Activated CD8-positive, alpha-beta T cell treated with anti-CD3 and anti-CD28 coated beads, Interleukin-2, amount 10 ng/mL, durations not matched to agents 7 days and 5 days (primary cell): ENCODE measurements at regions of chr1 and their contacts with region 1.

Region 1: DNA sequence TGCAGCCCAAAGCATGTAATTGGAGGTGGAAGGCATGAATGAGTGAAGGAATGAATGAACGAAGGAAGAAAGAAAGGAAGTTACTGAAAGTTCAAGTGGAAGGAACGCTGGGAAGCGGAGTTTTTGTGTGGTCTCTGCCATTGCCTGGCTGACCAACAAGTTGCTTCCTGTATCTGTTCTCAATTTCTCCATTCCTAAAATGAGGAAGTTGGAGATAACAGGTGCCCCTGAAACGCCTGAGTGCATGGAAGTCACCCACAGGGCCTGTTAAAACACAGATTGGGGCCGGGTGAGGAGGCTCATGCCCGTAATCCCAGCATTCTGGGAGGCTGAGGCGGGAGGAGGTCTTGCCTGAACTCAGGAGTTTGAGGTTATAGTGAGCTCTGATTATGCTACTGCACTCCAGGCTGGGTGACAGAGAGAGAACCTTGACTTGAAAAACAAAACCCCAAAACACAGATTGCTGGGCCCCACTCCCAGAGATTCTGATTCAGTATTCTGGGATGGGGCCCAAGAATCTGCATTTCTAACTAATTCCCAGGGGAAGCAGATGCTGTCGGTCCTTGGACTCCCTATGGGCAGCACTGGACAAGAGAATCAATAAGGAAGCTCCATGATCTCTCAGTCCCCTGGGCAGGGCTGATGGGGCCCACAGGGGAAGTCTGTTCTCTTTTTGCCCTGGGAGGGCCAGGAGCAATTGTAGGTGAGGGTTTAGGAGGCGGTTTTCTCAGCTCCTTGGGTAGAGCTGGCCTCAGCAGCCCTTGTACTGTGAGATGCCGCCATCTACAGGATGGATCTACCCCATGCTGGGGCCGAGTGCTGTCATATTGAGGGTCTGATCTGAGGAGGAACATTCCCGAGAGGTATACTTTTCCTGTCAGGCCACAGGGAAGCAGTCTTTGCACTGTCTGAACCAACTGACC is 3.3 kb upstream of the CNR2 start:
- DNase-seq: peak; percentile 84
- ATAC-seq: peak; percentile 93
- H3K4me3 Mint-ChIP-seq: no peak overlapping the region
- H3K27ac Mint-ChIP-seq: peak overlapping the region; percentile 5
- H3K4me1 Mint-ChIP-seq: peaks cover 49% of the 10 kb centered on the region
- H3K27me3 Mint-ChIP-seq: no peaks in the 10 kb centered on the region

Region 2: GRCh38 chr1:23777979-23778814 is 138.3 kb before region 1 on chr1 and contains the start of gene PITHD1:
- CTCF ChIA-PET with region 1: interaction called, 23 read pairs
- POLR2A ChIA-PET with region 1: no interaction called
- DNase-seq: peak; percentile 86
- ATAC-seq: peak; percentile 90
- H3K4me3 Mint-ChIP-seq: peak within 1 kb of the TSS; percentile 84
- H3K27ac Mint-ChIP-seq: peak within 1 kb of the TSS; percentile 94
- H3K4me1 Mint-ChIP-seq: peaks cover 51% of the 10 kb centered on the region
- H3K27me3 Mint-ChIP-seq: no peaks in the 10 kb centered on the region
- total RNA-seq, gene PITHD1: 62.3 to 67.9 TPM

Region 3: DNA sequence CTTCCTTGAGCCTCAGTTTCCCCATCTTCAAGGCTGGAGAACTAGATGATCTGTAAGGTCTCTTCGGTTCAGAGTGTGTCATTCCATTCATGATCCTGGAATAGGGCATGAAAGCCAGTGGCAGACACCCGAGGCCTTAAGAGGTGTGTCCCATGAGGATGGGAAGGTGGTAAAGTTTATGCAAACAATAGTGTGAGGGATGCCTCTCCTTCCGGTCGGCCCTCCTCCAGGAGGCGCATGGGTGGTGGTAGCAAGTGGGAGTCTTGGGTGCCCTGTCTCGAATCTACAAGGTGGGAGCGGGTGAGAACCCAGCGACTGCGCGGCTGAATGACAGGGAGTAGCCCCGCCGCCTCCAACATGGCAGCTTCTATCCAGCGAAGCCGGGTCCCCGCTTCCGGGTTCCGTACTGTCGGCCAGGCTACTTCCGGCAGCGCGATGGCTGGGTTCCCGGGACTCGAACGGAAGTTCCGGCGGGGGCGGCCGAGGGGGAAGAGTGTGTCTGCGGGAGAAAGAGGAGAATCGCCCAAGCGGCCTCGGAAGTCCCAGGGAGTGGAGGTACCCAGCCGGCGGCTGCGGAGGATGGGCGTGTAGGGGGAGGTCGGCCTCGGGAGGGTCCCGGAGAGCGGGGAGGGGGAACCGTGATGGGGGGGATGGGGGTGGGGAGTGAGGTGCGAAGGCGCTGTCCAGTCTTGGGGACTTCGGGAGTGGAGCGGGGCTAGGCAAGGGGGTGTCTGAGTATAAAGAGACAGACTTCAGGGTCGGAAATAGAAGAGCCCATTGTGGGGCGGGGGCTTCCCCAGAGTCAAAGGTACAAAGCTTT is 125.6 kb before region 1 on chr1 and contains the start of gene LYPLA2:
- CTCF ChIA-PET with region 1: interaction called, 10 read pairs
- POLR2A ChIA-PET with region 1: no interaction called
- DNase-seq: peak; percentile 92
- ATAC-seq: peak; percentile 90
- H3K4me3 Mint-ChIP-seq: peak within 1 kb of the TSS; percentile 95
- H3K27ac Mint-ChIP-seq: peak within 1 kb of the TSS; percentile 97
- H3K4me1 Mint-ChIP-seq: peaks cover 36% of the 10 kb centered on the region
- H3K27me3 Mint-ChIP-seq: no peaks in the 10 kb centered on the region
- total RNA-seq, gene LYPLA2: 84.2 to 88.2 TPM

Region 4: GRCh38 chr1:23800400-23801337 is 115.8 kb before region 1 on chr1 and contains the start of gene GALE:
- CTCF ChIA-PET with region 1: interaction called, 44 read pairs
- POLR2A ChIA-PET with region 1: interaction called, 3 read pairs
- DNase-seq: peak; percentile 99
- ATAC-seq: peak; percentile 89
- H3K4me3 Mint-ChIP-seq: peak within 1 kb of the TSS; percentile 97
- H3K27ac Mint-ChIP-seq: peak within 1 kb of the TSS; percentile 96
- H3K4me1 Mint-ChIP-seq: peaks cover 21% of the 10 kb centered on the region
- H3K27me3 Mint-ChIP-seq: no peaks in the 10 kb centered on the region
- total RNA-seq, gene GALE: 27.6 to 31.9 TPM

Region 5: DNA sequence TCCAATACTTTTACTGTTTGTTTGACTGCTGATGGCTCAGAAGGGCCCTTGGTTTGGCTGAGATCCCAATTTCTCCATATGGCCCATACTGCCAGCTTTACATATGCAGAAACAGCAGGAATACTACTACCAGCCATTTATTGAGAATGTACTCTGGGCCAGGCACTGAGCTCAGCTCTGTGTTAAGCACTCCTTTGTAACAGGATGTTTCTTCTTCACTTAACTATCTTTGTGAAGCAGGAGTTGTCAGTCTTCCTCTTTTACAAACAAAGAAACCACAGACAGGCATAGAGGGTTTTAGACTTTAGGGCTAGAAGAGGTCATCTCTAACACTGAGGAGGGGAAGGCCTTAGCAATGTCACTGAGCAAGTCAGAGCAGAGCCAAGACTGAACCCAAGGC is 99.6 kb before region 1 on chr1:
- CTCF ChIA-PET with region 1: interaction called, 131 read pairs
- POLR2A ChIA-PET with region 1: interaction called, 4 read pairs
- DNase-seq: no peak
- ATAC-seq: no peak
- H3K4me3 Mint-ChIP-seq: no peak overlapping the region
- H3K27ac Mint-ChIP-seq: no peak overlapping the region
- H3K4me1 Mint-ChIP-seq: peaks cover 9% of the 10 kb centered on the region
- H3K27me3 Mint-ChIP-seq: no peaks in the 10 kb centered on the region